ENCODE measurements at regions of chr6 and their contacts with region 1.

Region 1: GRCh38 chr6:35139908-35140655 is 1.1 kb downstream of the TCP11 start:
- DNase-seq: peak; percentile 40 to 44
- ATAC-seq: peak; percentile 36

Region 2: DNA sequence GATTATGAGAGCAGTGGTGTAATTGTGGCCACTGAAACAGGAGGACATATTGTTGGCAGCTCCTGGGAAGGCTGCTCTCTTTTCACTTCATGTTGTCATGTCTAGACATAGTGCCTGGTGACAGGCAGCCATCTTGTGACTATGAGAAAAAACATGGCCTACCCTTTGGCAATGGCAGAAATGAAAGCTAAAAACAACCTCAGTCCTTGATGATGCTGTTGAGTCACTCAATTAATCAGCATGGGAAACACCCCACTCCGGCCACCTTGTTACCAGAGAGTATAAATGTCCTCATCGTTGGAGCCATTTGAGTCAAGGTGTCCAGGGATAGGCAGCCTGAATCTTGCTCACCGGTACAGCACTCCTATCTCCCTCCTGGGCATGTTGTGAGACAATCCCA is 934.6 kb before region 1 on chr6:
- intact Hi-C with region 1: no loop called
- DNase-seq: no peak
- ATAC-seq: no peak

Region 3: GRCh38 chr6:34986845-34987246 is 153.2 kb before region 1 on chr6:
- intact Hi-C with region 1: loop called (anchors 2 to 10 kb)
- DNase-seq: peak; percentile 43 to 73
- ATAC-seq: peak; percentile 83

Region 4: GRCh38 chr6:35064757-35065440 is 75.2 kb before region 1 on chr6:
- intact Hi-C with region 1: loop called in 1 of 2 experiments (anchors 10 kb)
- DNase-seq: no peak
- ATAC-seq: no peak

Region 5: GRCh38 chr6:35240840-35241801 is 101.0 kb after region 1 on chr6:
- intact Hi-C with region 1: loop called (anchors 1 to 10 kb)
- DNase-seq: peak; percentile 49 to 79
- ATAC-seq: peak; percentile 93

Measured in left colon (tissue), 2 donors.